ENCODE measurements at regions of chr6 and their contacts with region 1.

Region 1: DNA sequence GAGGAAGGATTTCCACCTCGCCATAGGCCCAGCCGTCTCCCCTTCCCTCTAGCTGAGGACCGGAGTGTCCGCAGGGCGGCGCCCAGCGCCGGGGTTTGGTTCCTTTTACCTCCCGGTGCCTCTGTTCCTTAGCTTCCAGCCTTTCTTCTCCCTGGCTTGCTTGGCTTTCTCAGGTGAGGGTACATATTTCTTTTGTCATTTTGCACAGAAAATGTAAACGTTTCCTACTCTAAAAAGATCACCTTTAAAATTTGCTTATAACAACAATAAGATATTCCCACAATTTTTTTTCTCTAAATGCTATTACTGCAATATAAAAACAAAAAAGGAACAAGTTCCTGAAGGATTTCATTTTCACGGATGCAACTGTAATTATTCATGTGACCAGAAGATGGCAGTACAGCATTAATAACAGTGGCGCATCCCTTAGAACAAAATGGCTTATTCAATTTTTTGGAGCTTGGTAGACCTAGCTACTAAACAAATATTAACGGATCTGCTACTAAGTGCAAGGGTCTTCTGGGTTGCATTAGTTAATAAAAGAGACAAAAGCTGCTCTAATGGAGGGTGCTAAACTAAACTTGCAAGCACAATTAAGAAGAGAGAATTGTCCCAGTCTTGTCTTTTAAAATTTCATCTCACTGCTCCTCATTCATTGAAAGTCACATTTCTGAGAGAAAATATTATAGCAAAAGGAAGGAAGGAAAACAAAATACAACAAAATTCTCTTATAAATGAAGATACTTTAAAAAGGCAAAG is 172.9 kb downstream of the ADGRG6 start:
- DNase-seq: peak; percentile 76
- ATAC-seq: peak; percentile 93
- H3K4me3 ChIP-seq: no peak overlapping the region
- H3K27ac ChIP-seq: no peak overlapping the region
- H3K4me1 ChIP-seq: no peaks in the 10 kb centered on the region; the same call in 1 of the 2 replicates
- H3K27me3 ChIP-seq: no peaks in the 10 kb centered on the region
- CTCF ChIP-seq: peak; percentile 83
- POLR2A ChIP-seq: no peak
- RAD21 ChIP-seq: peak; percentile 85

Region 2: GRCh38 chr6:142146828-142147662 is 327.7 kb before region 1 on chr6 and contains the starts of genes NMBR and VTA1:
- CTCF ChIA-PET with region 1: no interaction called
- POLR2A ChIA-PET with region 1: no interaction called
- dilution Hi-C with region 1: no loop called
- in situ Hi-C with region 1: no loop called
- intact Hi-C with region 1: loop called (anchors 1 kb)
- DNase-seq: peak; percentile 100
- ATAC-seq: peak; percentile 97
- H3K4me3 ChIP-seq: peak within 1 kb of the TSS; percentile 77
- H3K27ac ChIP-seq: peak within 1 kb of the TSS; percentile 78
- H3K4me1 ChIP-seq: peaks cover 6% of the 10 kb centered on the region
- H3K27me3 ChIP-seq: no peaks in the 10 kb centered on the region
- CTCF ChIP-seq: peak; percentile 97
- POLR2A ChIP-seq: peak; percentile 56; the same call in 1 of the 2 replicates
- RAD21 ChIP-seq: peak; percentile 91
- total RNA-seq, gene NMBR: not detected in 2 replicates
- total RNA-seq, gene VTA1: 104 and 120 TPM in 2 replicates

Region 3: GRCh38 chr6:142537612-142538478 is 63.1 kb after region 1 on chr6:
- CTCF ChIA-PET with region 1: interaction called, 6 read pairs
- POLR2A ChIA-PET with region 1: no interaction called
- dilution Hi-C with region 1: no loop called
- in situ Hi-C with region 1: no loop called
- intact Hi-C with region 1: loop called (anchors 1 kb)
- DNase-seq: peak; percentile 34
- ATAC-seq: peak; percentile 59; the same call in 1 of the 2 replicates
- H3K4me3 ChIP-seq: no peak overlapping the region
- H3K27ac ChIP-seq: no peak overlapping the region
- H3K4me1 ChIP-seq: peaks cover under 1% of the 10 kb centered on the region; the same call in 1 of the 2 replicates
- H3K27me3 ChIP-seq: peaks cover 2% of the 10 kb centered on the region
- CTCF ChIP-seq: peak; percentile 58
- POLR2A ChIP-seq: no peak
- RAD21 ChIP-seq: peak; percentile 64

Region 4: DNA sequence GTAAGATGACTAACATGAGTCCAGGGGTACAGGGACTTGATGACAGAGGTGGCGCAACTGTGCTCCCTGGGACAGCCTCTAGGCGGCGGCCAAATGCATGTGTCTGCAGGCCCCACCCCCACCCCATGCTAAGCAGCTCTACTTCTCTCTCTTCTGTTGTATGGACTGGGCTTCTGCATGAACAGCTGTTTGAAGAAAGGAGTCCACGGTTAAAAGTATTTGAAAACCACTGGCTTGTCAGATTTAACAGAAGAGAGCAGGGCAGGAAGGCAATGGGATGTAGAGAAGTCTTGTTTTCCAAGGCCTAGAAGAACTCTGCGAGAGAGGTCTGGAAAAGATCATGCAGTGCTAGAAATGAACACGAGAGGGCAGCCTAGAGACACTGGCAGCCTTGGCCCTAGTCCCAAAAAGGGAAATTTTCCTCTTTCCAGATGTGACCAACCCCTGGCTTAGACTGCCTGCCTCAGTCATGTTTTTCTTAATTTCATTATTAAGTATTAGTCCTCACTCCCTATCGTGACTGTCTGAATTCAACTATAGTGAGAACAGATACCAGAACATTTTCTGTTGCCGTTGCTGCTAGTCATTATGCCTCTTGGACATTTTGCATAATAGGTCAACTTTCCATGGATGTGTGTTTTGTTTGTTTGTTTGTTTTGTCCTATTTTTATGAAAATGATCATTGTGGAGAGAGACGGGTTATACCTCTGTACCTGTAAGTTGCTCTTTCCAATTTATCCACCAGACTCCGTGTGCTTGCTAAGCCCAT is 92.1 kb after region 1 on chr6:
- CTCF ChIA-PET with region 1: interaction called, 4 read pairs
- POLR2A ChIA-PET with region 1: no interaction called
- dilution Hi-C with region 1: no loop called
- in situ Hi-C with region 1: no loop called
- intact Hi-C with region 1: loop called (anchors 10 kb)
- DNase-seq: peak; percentile 47
- ATAC-seq: peak; percentile 79
- H3K4me3 ChIP-seq: no peak overlapping the region
- H3K27ac ChIP-seq: no peak overlapping the region
- H3K4me1 ChIP-seq: peaks cover 4% of the 10 kb centered on the region; the same call in 1 of the 2 replicates
- H3K27me3 ChIP-seq: peaks cover 7% of the 10 kb centered on the region
- CTCF ChIP-seq: peak; percentile 77
- POLR2A ChIP-seq: no peak
- RAD21 ChIP-seq: peak; percentile 67

Region 5: GRCh38 chr6:142850679-142851423 is 376.1 kb after region 1 on chr6:
- CTCF ChIA-PET with region 1: no interaction called
- POLR2A ChIA-PET with region 1: no interaction called
- dilution Hi-C with region 1: no loop called
- in situ Hi-C with region 1: no loop called
- intact Hi-C with region 1: no loop called
- DNase-seq: peak; percentile 71
- ATAC-seq: no peak
- H3K4me3 ChIP-seq: no peak overlapping the region
- H3K27ac ChIP-seq: no peak overlapping the region
- H3K4me1 ChIP-seq: peaks cover 11% of the 10 kb centered on the region
- H3K27me3 ChIP-seq: no peaks in the 10 kb centered on the region
- CTCF ChIP-seq: no peak
- POLR2A ChIP-seq: no peak
- RAD21 ChIP-seq: no peak

Region 6: DNA sequence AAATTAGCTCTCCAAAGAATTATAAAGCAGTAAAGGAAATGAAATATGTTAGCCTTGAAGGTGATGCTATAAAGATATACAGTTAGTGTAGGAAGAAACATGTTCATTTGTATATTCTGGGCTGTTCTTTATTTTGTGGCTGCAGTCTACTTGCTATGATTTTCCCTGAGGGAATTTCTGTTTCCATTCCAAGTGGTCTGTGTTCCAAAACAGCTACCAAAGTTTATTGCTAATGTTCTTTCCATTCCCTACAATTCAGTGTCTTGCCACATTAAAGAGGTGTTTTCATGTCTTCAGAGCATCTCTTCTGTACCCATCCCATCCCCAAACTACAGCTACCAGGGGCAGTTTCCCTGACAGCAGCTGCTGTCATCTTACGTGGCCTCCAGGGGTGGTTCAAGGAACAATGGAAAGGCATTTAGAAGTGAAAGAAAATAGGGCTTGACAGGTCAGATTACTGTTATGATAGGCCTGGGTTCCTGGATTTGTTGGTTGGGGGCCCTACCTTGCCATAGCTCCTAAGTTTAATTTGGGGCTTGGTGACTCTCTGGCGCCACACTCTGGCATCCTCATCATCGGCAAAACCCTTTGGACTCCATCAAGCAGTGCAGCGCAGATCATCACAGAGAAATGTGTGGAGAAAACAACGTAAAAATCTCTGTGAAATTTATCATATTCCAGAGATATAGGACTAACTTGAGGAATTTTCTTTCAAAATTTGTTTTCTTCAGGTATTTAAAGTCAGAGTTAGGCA is 552.2 kb after region 1 on chr6:
- CTCF ChIA-PET with region 1: no interaction called
- POLR2A ChIA-PET with region 1: no interaction called
- dilution Hi-C with region 1: no loop called
- in situ Hi-C with region 1: no loop called
- intact Hi-C with region 1: loop called (anchors 2 kb)
- DNase-seq: peak; percentile 24
- ATAC-seq: peak; percentile 61
- H3K4me3 ChIP-seq: no peak overlapping the region
- H3K27ac ChIP-seq: no peak overlapping the region
- H3K4me1 ChIP-seq: no peaks in the 10 kb centered on the region
- H3K27me3 ChIP-seq: no peaks in the 10 kb centered on the region
- CTCF ChIP-seq: peak; percentile 72
- POLR2A ChIP-seq: no peak
- RAD21 ChIP-seq: peak; percentile 80

Region 7: DNA sequence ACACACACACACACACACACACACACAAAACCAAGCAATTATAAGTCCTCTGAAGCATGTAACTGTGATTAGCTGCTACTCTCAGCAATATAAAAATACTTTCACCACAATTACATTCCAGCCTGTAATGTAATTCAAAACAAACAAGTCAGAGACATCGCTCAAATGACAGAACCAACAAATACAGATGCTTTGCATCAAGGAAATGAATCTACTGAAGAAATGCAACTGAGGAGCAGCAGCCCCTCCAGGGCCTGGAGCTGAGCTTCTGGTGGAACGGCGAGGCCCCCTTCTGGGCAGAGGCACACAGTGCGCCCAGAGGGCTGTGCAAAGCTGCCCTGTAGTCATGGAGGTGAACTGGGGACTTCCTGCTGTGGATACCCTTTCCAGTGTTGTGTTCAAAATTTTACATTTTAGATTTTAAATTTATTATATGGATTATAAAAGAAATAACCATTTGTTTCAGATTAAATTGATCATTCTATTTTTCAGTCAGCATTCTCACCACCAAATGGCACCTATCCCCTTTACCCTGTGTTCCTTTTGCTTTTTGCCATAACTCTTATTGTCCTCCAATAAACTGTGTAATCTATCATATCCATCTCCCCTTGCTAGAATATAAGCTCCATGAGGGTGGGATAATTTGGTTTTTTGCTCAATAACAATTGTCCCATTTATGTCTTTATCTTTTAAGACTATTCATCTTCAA is 952.6 kb after region 1 on chr6:
- CTCF ChIA-PET with region 1: interaction called, 11 read pairs
- POLR2A ChIA-PET with region 1: no interaction called
- dilution Hi-C with region 1: no loop called
- in situ Hi-C with region 1: loop called (anchors 10 kb)
- intact Hi-C with region 1: loop called (anchors 2 kb)
- DNase-seq: peak; percentile 86
- ATAC-seq: peak; percentile 100
- H3K4me3 ChIP-seq: no peak overlapping the region
- H3K27ac ChIP-seq: no peak overlapping the region
- H3K4me1 ChIP-seq: peaks cover 2% of the 10 kb centered on the region
- H3K27me3 ChIP-seq: no peaks in the 10 kb centered on the region
- CTCF ChIP-seq: peak; percentile 97
- POLR2A ChIP-seq: peak; percentile 51; the same call in 1 of the 2 replicates
- RAD21 ChIP-seq: peak; percentile 99

Region 8: DNA sequence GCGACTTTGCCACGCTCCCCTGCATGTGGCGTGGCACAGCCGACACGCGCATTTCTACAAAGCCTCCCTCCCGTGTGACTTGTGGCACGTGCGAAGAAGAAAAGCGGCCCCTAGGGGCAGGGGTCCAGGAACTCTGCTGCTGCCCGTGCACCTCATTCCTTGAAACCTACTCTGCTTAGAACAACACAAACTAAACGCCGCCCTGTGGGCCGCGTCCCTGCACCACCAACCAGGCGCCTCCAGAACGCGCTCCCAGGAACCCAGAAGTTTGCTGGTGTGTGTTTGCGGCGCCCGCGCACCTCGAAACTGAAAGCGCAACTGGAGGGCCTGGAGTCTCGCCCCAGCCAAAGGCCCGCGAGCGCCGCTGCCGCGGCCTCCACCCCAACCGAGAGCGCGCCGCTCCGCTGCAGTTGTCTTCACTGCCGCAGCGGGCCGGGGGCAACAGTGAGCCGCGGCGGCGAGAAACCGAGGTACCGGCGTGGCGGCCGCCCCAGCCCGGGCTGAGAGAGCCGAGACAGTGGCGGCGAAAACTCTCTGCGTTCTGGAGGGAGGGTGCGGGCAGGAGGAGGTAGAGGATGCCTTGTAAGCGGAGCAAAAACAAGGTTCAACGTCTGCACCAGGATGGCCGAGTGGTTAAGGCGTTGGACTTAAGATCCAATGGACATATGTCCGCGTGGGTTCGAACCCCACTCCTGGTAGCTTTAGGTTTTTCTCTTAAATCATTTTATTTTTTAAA is 1741.4 kb after region 1 on chr6:
- CTCF ChIA-PET with region 1: no interaction called
- POLR2A ChIA-PET with region 1: no interaction called
- dilution Hi-C with region 1: no loop called
- in situ Hi-C with region 1: no loop called
- intact Hi-C with region 1: loop called (anchors 5 kb)
- DNase-seq: peak; percentile 98
- ATAC-seq: peak; percentile 89
- H3K4me3 ChIP-seq: peak overlapping the region; percentile 58
- H3K27ac ChIP-seq: peak overlapping the region; percentile 72
- H3K4me1 ChIP-seq: peaks cover 8% of the 10 kb centered on the region
- H3K27me3 ChIP-seq: no peaks in the 10 kb centered on the region
- CTCF ChIP-seq: peak; percentile 83
- POLR2A ChIP-seq: 0 out of 2 replicates have a peak, but pooled peaks have one; percentile 33
- RAD21 ChIP-seq: peak; percentile 81

Measured in IMR-90 (cell line).